ENCODE measurements at regions of chr4 and their contacts with region 1.

Region 1: GRCh38 chr4:40897557-40898203 is 147.9 kb downstream of the NSUN7 start:
- DNase-seq: peak; percentile 67 to 73
- ATAC-seq: peak in 6 of 8 donors; percentile 56 to 71 (median 66)
- H3K4me3 ChIP-seq: peak overlapping the region in 1 of 10 donors; percentile 3
- H3K27ac ChIP-seq: no peak overlapping the region
- H3K4me1 ChIP-seq: peaks cover 0 to 7% (median 0%) of the 10 kb centered on the region in 9 donors
- H3K27me3 ChIP-seq: no peaks in the 10 kb centered on the region
- CTCF ChIP-seq: peak; percentile 57 to 85 (median 79)

Region 2: GRCh38 chr4:40736910-40737309 is 160.8 kb before region 1 on chr4:
- intact Hi-C with region 1: loop called in 8 of 10 experiments (anchors 2 to 10 kb)
- DNase-seq: no peak
- ATAC-seq: no peak
- H3K4me3 ChIP-seq: no peak overlapping the region
- H3K27ac ChIP-seq: no peak overlapping the region
- H3K4me1 ChIP-seq: peaks cover 0 to 21% (median 2%) of the 10 kb centered on the region in 9 donors
- H3K27me3 ChIP-seq: peaks cover 0 to 9% (median 0%) of the 10 kb centered on the region in 7 donors
- CTCF ChIP-seq: peak in 7 of 9 donors; percentile 19 to 47 (median 40)

Region 3: DNA sequence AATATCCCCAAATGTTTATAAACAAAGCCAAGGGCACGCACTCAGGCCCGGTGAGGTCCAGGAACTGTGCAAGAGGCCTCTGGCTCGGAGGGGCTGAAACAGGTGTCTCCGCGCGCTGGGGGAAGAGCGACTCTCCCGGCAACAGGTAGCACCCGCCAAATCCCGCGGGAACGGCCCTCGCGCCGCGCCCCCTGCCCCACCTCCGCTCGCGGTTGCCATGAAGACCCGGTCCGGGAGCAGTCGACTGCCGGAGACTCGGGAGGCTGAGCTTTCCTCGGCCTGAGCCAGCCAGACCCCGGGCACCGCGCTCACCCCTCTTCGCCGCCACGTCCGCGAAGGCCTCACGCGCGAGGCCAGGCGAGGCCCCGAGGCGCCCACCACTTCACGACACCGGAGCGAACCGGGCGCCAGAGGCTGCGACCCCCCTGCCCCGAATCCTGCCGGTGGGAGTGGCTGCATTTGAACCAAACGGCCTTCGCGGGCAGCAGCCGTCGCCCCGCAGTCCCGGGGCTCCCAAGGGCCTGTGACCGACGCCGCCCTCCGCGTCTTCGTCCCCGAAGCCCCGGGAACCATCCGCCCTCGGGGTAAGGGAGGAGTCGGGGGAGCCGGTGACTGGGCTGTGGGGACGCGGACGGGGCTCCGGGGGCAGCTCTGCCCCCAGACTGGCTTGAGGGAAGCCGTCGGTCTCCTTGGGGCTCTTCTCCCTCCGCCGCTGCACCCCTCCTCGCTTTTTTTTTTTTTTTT is 147.8 kb before region 1 on chr4 and contains the start of gene NSUN7:
- intact Hi-C with region 1: loop called in 1 of 10 experiments (anchors 10 kb)
- DNase-seq: peak; percentile 22 to 26
- ATAC-seq: peak in 7 of 8 donors; percentile 33 to 81 (median 62)
- H3K4me3 ChIP-seq: peak within 1 kb of the TSS; percentile 27 to 58 (median 48)
- H3K27ac ChIP-seq: peak within 1 kb of the TSS in 1 of 10 donors; percentile 61
- H3K4me1 ChIP-seq: peaks cover 0 to 15% (median 12%) of the 10 kb centered on the region in 9 donors
- H3K27me3 ChIP-seq: peaks cover 4 to 57% (median 36%) of the 10 kb centered on the region in 7 donors
- CTCF ChIP-seq: no peak
- total RNA-seq, gene NSUN7: 0.15 to 1.3 (median 0.33) TPM in 7 of 10 donors, not detected in the others

Region 4: GRCh38 chr4:40840985-40841571 is 56.6 kb before region 1 on chr4:
- intact Hi-C with region 1: loop called in 5 of 10 experiments (anchors 5 to 10 kb)
- DNase-seq: peak; percentile 65 to 71
- ATAC-seq: peak; percentile 29 to 69 (median 62)
- H3K4me3 ChIP-seq: no peak overlapping the region
- H3K27ac ChIP-seq: peak overlapping the region in 5 of 10 donors; percentile 4 to 79 (median 61)
- H3K4me1 ChIP-seq: peaks cover 0 to 51% (median 10%) of the 10 kb centered on the region in 9 donors
- H3K27me3 ChIP-seq: no peaks in the 10 kb centered on the region
- CTCF ChIP-seq: peak; percentile 19 to 79 (median 65)

Measured in heart right ventricle (tissue), 16 donors.